ENCODE measurements at regions of chr7 and their contacts with region 1.

Region 1: GRCh38 chr7:39580149-39580874 is 14.1 kb downstream of the YAE1 start:
- DNase-seq: peak; percentile 55 to 64
- H3K4me3 ChIP-seq: no peak overlapping the region
- H3K27ac ChIP-seq: no peak overlapping the region
- H3K4me1 ChIP-seq: no peaks in the 10 kb centered on the region
- H3K27me3 ChIP-seq: no peaks in the 10 kb centered on the region
- CTCF ChIP-seq: peak; percentile 68 to 87 (median 86)
- POLR2A ChIP-seq: no peak

Region 2: DNA sequence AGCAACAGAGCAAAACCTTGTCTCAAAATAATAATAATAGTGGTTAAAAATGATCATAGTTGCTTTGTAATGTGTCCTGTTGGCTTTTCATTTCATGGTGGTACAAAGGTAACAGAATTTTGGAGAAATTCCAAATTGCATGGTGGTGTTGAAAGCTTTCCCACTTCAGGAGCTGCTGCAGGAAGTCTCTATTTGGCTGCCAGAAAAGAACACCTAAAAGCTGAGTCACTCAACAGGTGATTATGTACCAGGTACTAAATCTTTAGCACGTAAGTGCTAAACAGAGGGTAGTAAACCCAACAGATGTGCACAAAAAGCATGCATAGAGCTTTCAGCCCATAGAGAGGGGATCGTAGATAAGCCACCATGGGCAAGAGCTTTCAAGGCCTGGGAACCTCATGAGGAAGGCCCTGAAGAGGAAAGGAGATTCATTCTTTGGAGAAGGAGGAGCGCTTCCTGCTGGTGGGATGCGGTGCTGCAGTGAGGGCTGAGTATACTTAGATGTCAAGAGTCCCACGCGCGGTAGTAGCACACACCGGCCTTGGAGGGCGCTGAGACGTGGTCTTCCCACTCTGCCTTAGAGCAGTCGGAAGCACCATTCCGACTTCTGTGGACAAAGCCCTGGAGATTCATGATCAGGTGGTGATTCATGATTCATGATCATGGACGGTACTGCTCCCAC is 161.8 kb after region 1 on chr7:
- intact Hi-C with region 1: loop called (anchors 5 kb)
- DNase-seq: no peak
- H3K4me3 ChIP-seq: no peak overlapping the region
- H3K27ac ChIP-seq: peak overlapping the region; percentile 17 to 27
- H3K4me1 ChIP-seq: no peaks in the 10 kb centered on the region
- H3K27me3 ChIP-seq: no peaks in the 10 kb centered on the region
- CTCF ChIP-seq: no peak
- POLR2A ChIP-seq: no peak